ENCODE measurements at regions of chr7 and their contacts with region 1.

Region 1: GRCh38 chr7:44921607-44922359 is 36.5 kb upstream of the PURB start:
- DNase-seq: peak; percentile 95 to 98
- ATAC-seq: peak; percentile 92
- H3K4me3 ChIP-seq: no peak overlapping the region
- H3K27ac ChIP-seq: no peak overlapping the region
- H3K4me1 ChIP-seq: no peaks in the 10 kb centered on the region
- H3K27me3 ChIP-seq: no peaks in the 10 kb centered on the region

Region 2: DNA sequence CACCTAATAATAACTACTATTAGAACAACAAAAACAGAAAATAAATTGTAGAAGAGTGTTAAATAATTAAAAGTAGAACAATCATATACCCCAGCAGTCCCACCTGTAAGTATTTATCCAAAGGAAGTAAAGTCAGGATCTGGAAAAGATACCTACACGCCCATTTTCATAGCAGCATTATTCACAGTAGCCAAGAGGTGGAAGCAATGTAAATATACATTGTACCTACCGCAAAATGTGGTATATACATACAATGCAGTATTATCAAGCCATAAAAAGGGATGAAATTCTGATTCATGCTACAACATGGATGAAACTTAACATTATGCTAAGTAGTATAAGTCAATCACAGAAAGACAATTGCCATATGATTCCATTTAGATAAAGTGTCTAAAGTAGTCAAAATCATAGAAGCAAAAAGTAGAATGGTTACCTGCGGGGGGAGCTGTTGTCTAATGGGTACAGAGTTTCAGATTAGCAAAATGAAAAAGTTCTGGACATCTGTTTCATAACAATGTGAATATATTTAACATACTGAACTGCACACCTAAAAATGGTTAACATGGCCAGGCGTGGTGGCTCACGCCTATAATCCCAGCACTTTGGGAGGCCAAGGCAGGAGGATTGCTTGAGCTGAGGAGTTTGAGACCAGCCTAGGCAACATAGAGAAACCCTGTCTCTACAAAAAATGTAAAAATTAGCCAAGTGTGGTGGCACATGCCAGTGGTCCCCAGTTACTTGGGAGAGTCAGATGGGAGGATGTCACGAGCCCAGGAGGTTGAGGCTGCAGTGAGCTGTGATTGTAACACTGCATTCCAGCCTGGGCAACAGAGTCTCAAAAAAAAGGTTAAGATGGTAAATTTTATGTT is 333.7 kb before region 1 on chr7:
- intact Hi-C with region 1: loop called (anchors 2 to 5 kb)
- DNase-seq: no peak
- ATAC-seq: peak; percentile 57
- H3K4me3 ChIP-seq: no peak overlapping the region
- H3K27ac ChIP-seq: no peak overlapping the region
- H3K4me1 ChIP-seq: no peaks in the 10 kb centered on the region
- H3K27me3 ChIP-seq: no peaks in the 10 kb centered on the region

Region 3: DNA sequence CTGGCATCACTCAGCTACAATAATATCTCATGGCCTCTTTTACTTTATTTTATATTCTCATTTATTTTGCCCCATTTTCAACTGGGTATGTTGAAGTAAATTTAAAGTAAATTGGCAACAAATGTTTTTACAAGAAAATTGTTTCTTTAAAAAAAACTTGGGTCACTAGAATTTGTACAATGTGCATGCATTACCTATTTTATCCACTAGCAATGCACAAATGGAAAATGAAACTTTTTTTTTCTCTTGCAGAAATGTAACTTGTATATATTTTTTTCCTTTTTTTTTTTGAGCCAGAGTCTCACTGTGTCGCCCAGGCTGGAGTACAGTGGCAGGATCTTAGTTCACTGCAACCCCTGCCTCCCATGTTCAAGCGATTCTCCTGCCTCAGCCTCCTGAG is 63.6 kb before region 1 on chr7:
- intact Hi-C with region 1: loop called (anchors 2 to 5 kb)
- DNase-seq: no peak
- ATAC-seq: no peak
- H3K4me3 ChIP-seq: no peak overlapping the region
- H3K27ac ChIP-seq: no peak overlapping the region
- H3K4me1 ChIP-seq: no peaks in the 10 kb centered on the region
- H3K27me3 ChIP-seq: no peaks in the 10 kb centered on the region

Measured in aorta (tissue), 5 donors.